Left ventricle myocardium inferior (tissue), 1 donor: ENCODE measurements at regions of chr7 and their contacts with region 1.

Region 1: GRCh38 chr7:116173051-116174028 is 37.0 kb upstream of the TES start:
- DNase-seq: no peak
- H3K4me3 ChIP-seq: no peak overlapping the region
- H3K27ac ChIP-seq: no peak overlapping the region
- H3K4me1 ChIP-seq: no peaks in the 10 kb centered on the region
- H3K27me3 ChIP-seq: no peaks in the 10 kb centered on the region
- CTCF ChIP-seq: peak; percentile 66

Region 2: DNA sequence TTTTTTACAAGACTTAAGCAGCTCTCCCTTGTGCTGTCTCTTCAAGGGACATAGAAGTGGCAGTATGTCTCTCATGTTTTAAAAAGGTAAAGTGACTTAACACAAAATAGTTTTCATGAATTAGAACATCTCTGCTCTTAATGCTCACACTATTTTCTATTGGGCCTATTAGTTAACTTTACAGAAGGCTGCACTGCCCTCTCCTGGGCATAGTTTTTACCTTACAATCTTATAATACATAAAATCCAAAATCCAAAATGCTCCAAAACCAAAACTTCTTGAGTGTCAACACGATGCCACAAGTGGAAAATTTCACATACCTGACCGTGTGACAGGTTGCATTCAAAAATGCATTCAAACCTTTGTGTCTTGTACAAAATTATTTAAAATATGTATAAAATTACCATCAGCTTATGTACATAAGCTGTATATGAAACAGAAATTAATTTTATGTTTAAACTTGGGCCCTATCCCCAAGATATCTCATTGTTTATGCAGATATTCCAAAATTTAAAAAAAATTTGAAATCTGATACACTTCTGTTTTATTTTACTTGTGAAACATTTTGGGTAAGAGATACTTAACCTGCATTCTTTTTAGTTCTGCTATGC is 62.8 kb after region 1 on chr7:
- intact Hi-C with region 1: loop called (anchors 5 kb)
- DNase-seq: no peak
- H3K4me3 ChIP-seq: no peak overlapping the region
- H3K27ac ChIP-seq: no peak overlapping the region
- H3K4me1 ChIP-seq: peaks cover 30% of the 10 kb centered on the region
- H3K27me3 ChIP-seq: no peaks in the 10 kb centered on the region
- CTCF ChIP-seq: peak; percentile 67